SK-N-SH (cell line): ENCODE measurements at regions of chr11 and their contacts with region 1.

Region 1: DNA sequence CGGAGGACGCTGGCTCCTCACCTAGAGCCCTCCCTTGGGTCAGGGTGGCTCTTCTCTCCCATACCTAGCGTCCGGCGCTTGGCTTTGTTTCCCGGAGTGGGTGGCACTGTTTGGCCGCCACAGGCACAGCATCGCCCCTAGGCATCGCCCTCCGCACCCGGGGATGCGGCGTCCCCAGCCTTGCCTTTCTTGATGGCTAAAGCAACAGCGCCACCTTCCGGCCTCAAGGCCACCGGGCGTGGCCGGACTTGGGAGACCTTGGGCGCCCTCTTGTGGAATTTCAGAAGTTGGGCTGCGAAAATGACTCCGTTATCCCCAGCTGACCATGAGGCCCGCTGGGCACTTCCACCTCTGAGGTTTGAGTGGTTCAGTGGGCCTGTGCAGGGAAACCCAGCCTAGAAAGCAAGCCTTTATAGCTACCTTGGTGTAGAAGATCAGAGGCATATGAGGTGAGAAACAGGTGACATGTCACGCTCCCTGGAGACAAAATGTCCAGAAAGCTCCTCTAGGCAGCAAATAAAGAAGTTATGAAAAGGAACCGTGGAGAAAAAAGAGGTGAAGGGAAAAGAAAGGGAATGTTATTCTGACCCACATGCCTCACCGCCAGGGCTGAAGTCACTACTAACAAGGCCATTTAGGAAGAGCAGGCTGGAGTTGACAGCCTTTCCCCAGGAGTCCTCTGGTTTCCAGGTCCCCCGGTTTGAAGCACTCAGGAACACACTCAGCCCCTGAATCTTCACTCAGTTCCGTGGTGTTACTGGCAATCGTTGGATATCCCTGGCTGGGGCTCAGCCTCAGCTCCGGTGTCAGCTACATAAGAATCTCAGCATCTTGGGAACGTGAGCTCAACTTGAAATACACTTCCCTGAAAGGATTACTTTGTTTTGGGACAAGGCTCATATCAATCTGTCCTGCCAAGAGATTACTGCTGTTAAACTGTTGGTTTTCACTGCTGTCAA is 54.1 kb downstream of the SNX19 start:
- DNase-seq: peak; percentile 87
- H3K4me3 ChIP-seq: peak overlapping the region in 1 of 2 experiments; percentile 55; a peak in 1 of 4 replicates
- H3K27ac ChIP-seq: no peak overlapping the region
- H3K4me1 ChIP-seq: peaks cover 0 to 2% of the 10 kb centered on the region in 2 experiments; a peak in 1 of 4 replicates
- H3K27me3 ChIP-seq: no peaks in the 10 kb centered on the region
- CTCF ChIP-seq: peak; percentile 99
- EP300 ChIP-seq: no peak
- RAD21 ChIP-seq: peak; percentile 99

Region 2: DNA sequence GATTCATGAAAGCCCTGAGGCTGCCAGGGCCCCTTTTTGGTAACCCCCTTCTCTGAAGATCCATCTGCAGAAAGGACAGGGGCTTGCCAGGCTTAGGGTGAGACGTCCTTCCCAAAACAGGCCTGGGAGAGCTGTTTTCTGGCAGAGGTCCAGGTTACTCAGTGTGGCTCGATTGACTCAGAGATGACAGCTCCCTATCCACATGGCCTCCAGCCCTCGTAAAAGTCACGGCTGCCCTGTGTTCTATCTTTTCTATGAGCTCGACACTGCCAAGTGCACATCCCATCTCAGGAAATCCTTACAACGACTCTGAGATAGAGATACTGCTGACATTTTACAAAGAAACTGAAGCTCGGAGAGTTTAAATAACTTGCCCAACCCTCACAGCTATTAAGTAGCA is 454.2 kb before region 1 on chr11:
- CTCF ChIA-PET with region 1: interaction called, 10 read pairs
- POLR2A ChIA-PET with region 1: no interaction called
- DNase-seq: no peak
- H3K4me3 ChIP-seq: no peak overlapping the region
- H3K27ac ChIP-seq: no peak overlapping the region
- H3K4me1 ChIP-seq: peaks cover 9% of the 10 kb centered on the region in 2 experiments; a peak in 2 of 4 replicates
- H3K27me3 ChIP-seq: no peaks in the 10 kb centered on the region
- CTCF ChIP-seq: no peak
- EP300 ChIP-seq: peak in 1 of 2 experiments; percentile 19; a peak in 1 of 4 replicates
- RAD21 ChIP-seq: no peak

Region 3: DNA sequence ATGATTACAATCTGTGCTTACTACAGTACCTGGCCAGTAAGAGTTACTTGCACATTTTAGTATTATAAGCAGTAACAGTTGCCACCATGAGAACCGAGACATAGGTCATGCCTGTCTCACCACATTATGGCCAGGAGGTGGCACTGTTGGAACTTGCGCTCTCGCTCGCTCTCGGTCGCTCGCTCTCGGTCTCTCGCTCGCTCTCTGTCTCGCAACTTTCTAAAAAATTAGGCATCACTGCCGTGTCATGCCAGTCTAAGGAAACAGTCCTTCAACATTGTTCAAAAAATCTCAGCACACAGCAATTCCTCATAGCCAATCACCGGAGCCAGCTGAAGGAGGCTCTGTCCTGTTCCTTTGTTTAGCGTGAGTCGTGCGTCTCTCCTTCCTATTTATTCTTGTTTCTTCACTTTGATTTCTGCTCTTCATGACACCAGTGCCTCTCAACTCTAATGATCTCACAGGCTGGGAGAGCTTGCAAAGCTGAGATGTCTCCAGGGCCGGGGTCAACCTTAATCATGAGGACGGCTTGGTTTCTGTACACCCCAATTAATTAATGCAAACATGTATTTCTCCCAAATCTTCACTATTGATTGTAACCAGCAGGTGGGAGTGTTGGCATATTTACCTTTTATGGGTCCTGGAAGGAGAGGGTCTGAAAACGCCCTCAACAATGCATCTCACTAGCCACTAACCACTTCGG is 427.5 kb before region 1 on chr11:
- CTCF ChIA-PET with region 1: interaction called, 747 read pairs
- POLR2A ChIA-PET with region 1: interaction called, 3 read pairs
- DNase-seq: peak; percentile 78
- H3K4me3 ChIP-seq: peak overlapping the region; percentile 70 to 76
- H3K27ac ChIP-seq: peak overlapping the region; percentile 3 to 68; a peak in 2 of 4 replicates
- H3K4me1 ChIP-seq: peaks cover 0 to 6% of the 10 kb centered on the region in 2 experiments; a peak in 2 of 4 replicates
- H3K27me3 ChIP-seq: peaks cover 9% of the 10 kb centered on the region
- CTCF ChIP-seq: peak; percentile 76
- EP300 ChIP-seq: no peak
- RAD21 ChIP-seq: peak; percentile 91

Region 4: DNA sequence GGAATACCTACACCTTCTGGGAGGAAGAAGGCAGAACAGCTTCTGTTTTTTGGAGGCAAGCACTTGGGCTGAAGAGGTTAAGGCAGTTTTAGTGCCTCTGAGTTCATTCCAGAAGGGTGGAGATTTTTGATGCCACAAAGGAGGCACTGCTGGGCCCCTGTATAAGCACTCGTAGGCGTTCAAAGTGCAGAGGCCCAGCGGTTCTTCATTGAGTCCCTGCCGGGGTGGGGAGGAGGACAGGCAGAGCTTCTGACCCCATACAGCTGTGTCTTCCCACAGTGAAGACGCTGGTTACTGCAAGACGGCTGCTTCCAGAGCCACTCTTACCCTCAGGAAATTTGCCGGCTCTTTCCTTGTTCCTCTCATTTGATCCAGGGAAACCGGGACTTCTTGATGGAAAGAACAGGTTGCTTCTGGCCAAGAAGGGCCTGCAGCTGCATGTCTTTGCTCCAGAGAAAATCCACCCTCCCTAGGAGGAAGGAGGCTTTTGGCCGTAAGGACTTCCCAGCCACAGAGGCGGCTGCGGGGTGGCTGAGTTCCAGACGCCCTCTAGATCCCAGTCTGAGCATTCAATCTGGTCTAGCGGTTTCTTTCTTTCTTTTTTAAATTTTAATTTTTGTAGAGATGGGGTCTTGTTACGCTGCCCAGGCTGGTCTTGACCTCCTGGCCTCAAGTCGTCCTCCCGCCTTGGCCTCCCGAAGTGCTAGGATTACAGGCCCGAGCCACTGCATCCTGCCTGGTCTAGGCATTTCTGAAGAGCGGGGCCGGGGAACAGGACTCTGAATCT is 404.4 kb before region 1 on chr11:
- CTCF ChIA-PET with region 1: interaction called, 15 read pairs
- POLR2A ChIA-PET with region 1: no interaction called
- DNase-seq: no peak
- H3K4me3 ChIP-seq: no peak overlapping the region
- H3K27ac ChIP-seq: no peak overlapping the region
- H3K4me1 ChIP-seq: 0 out of 4 replicates have a peak, but pooled peaks cover 0 to 8% of the 10 kb centered on the region in 2 experiments
- H3K27me3 ChIP-seq: no peaks in the 10 kb centered on the region
- CTCF ChIP-seq: no peak
- EP300 ChIP-seq: no peak
- RAD21 ChIP-seq: no peak

Region 5: DNA sequence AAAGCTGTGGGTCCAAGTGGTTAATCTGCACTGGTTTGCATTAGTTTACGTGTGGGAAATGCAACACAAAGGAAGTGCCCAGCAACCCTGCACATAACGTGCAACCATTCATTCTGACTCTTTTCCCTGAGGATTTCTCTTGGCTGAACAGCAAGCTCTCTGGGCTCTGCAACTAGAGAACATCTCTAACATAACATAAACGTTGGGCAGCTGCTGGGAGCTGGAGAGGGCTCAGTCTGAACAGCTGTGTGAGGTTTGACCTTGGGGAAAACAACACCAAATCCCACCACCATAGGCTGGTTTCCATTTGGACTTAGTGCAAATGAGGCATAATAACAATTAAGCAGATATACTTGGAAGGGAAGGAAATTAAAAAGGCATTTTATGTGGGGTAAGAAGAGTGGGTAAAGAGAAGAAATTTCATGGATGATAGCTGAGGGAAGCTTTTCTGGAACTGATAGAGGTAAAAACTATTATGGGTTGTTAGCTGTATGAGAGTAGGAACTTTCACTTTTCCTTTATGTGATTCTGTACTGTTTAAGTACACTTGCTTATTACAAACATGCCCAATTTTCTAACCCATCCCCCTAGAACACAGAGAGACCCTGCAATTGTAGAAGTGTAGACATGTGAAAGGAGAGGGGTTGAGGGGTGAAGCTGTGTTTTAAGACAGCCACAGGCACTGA is 22.1 kb before region 1 on chr11:
- CTCF ChIA-PET with region 1: interaction called, 18 read pairs
- POLR2A ChIA-PET with region 1: no interaction called
- DNase-seq: no peak
- H3K4me3 ChIP-seq: no peak overlapping the region
- H3K27ac ChIP-seq: no peak overlapping the region
- H3K4me1 ChIP-seq: no peaks in the 10 kb centered on the region
- H3K27me3 ChIP-seq: no peaks in the 10 kb centered on the region
- CTCF ChIP-seq: no peak
- EP300 ChIP-seq: no peak
- RAD21 ChIP-seq: no peak

Region 6: DNA sequence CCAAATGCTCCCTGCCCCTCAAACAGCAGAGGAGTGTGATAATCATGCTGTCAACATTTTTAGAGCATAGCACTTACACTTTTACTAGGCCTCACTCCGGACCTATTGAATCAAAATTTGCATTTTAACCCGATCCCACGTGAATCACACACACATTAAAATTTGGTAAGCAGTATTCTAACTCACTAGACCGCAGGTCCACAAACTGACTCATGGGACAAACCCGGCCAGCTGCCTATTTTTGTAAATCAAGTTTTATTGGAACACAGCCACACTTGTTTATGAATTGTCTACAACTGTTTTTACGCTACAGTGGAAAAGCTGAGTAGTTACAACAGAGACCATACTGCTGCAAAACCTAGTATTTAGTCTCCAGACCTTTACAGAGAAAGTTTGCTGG is 10.8 kb after region 1 on chr11:
- CTCF ChIA-PET with region 1: interaction called, 101 read pairs
- POLR2A ChIA-PET with region 1: no interaction called
- DNase-seq: no peak
- H3K4me3 ChIP-seq: no peak overlapping the region
- H3K27ac ChIP-seq: no peak overlapping the region
- H3K4me1 ChIP-seq: peaks cover 0 to 11% of the 10 kb centered on the region in 2 experiments; a peak in 1 of 4 replicates
- H3K27me3 ChIP-seq: no peaks in the 10 kb centered on the region
- CTCF ChIP-seq: no peak
- EP300 ChIP-seq: no peak
- RAD21 ChIP-seq: no peak

Region 7: GRCh38 chr11:130894322-130895025 is 32.3 kb after region 1 on chr11:
- CTCF ChIA-PET with region 1: interaction called, 45 read pairs
- POLR2A ChIA-PET with region 1: no interaction called
- DNase-seq: peak; percentile 57
- H3K4me3 ChIP-seq: no peak overlapping the region; a peak in 1 of 4 replicates
- H3K27ac ChIP-seq: no peak overlapping the region
- H3K4me1 ChIP-seq: no peaks in the 10 kb centered on the region; a peak in 1 of 4 replicates
- H3K27me3 ChIP-seq: no peaks in the 10 kb centered on the region
- CTCF ChIP-seq: peak; percentile 95
- EP300 ChIP-seq: no peak
- RAD21 ChIP-seq: peak; percentile 69